ENCODE measurements at regions of chr11 and their contacts with region 1.

Region 1: DNA sequence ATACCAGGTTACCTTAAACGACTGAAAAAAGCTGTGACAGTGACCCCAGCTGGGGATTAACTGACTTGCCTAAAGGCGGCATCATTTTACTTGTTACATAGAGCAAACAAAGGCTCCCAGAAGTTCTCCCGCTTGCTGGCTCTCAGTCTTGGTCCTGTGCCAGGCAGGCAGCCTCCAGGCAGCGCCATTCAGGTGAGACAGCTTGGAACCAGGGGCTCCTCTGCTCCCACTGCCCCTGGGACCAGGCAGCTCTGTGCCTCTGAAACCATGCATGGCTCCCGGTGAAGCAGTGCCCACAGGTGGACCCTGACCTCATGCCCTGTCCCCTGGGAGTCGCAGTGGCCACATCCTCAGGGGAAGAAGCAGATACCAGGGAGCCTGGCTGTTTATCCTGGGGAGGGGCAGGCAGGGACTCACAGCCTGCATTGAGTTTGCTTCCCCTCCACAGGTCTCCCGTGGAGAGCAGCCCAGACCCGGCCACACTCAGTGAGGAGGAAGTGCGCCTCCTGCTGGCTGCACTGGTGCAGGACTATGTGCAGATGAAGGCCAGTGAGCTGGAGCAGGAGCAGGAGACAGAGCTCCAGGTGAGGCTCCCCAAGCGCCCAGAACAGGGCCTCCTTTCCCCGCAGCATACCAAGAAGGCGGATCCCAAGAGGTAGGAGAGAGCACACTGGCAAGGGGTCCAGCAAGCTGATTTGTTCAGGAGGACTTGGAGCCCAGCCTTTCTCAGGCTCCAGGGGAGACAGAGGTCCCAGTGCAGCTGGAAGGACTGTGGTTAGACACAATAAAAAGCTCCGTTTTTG is 15.6 kb upstream of the CYP2R1 start:
- DNase-seq: peak; percentile 93
- ATAC-seq: peak; percentile 59
- H3K4me3 Mint-ChIP-seq: no peak overlapping the region
- H3K27ac Mint-ChIP-seq: no peak overlapping the region
- H3K4me1 Mint-ChIP-seq: peaks cover 48% of the 10 kb centered on the region
- H3K27me3 Mint-ChIP-seq: no peaks in the 10 kb centered on the region
- CTCF ChIP-seq: peak; percentile 90

Region 2: DNA sequence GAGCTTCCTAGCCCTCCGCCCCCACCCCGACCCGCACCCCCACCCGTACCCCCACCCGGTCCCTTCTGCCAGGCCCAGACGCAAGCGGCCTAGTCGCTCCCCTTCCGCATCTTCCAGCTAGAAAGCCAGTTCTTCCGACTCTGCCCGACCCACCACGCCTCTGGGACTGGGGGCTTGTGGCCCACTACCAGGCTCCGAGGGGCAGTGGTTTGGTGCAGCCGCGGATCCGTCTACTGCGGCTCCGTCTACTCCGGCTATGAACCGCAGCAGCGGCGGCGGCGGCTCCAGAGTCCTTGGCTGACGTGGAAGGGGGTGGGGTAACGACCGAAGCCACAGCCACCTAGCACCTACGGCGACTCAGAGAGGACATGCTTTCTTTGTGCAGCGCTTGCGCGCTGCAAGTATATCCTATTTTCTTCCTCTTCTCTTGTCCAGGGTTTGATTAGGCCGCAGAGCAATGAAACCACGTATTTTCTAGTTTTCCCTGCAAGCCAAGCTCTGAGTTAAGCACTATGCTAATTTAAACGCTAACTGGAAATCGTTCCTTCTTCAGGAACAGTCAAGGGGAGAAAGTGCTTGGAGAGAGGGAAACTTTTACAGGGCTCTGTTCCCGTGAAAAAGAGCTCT is 407.9 kb before region 1 on chr11 and contains the start of gene COPB1:
- CTCF ChIA-PET with region 1: interaction called, 10 read pairs
- POLR2A ChIA-PET with region 1: no interaction called
- intact Hi-C with region 1: no loop called
- DNase-seq: peak; percentile 96
- ATAC-seq: peak; percentile 94
- H3K4me3 Mint-ChIP-seq: peak within 1 kb of the TSS; percentile 96
- H3K27ac Mint-ChIP-seq: peak within 1 kb of the TSS; percentile 99
- H3K4me1 Mint-ChIP-seq: peaks cover 34% of the 10 kb centered on the region
- H3K27me3 Mint-ChIP-seq: no peaks in the 10 kb centered on the region
- CTCF ChIP-seq: no peak
- total RNA-seq, gene COPB1: 90.9 to 93.5 TPM

Region 3: DNA sequence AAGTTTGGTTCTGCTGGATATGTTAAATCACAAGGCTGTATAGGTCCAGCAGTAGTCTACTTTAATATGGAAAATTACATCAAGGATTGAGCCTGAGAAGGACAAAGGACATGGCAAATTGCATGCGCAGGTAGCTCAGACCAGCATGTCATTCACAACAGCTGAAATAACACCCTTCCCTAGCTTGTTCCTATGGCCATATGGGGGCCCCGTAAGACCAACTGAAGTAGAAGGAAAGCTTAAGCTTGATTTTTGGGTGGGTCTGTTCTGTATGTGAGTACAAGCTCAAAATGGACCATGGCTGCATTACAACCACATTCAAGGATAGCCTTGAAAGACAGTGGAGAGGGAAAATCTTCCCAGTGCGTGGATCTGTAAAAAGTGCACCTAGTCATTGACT is 284.6 kb before region 1 on chr11:
- CTCF ChIA-PET with region 1: interaction called, 13 read pairs
- POLR2A ChIA-PET with region 1: no interaction called
- intact Hi-C with region 1: no loop called
- DNase-seq: peak; percentile 12
- ATAC-seq: no peak
- H3K4me3 Mint-ChIP-seq: no peak overlapping the region
- H3K27ac Mint-ChIP-seq: no peak overlapping the region
- H3K4me1 Mint-ChIP-seq: peaks cover 75% of the 10 kb centered on the region
- H3K27me3 Mint-ChIP-seq: no peaks in the 10 kb centered on the region
- CTCF ChIP-seq: no peak

Region 4: DNA sequence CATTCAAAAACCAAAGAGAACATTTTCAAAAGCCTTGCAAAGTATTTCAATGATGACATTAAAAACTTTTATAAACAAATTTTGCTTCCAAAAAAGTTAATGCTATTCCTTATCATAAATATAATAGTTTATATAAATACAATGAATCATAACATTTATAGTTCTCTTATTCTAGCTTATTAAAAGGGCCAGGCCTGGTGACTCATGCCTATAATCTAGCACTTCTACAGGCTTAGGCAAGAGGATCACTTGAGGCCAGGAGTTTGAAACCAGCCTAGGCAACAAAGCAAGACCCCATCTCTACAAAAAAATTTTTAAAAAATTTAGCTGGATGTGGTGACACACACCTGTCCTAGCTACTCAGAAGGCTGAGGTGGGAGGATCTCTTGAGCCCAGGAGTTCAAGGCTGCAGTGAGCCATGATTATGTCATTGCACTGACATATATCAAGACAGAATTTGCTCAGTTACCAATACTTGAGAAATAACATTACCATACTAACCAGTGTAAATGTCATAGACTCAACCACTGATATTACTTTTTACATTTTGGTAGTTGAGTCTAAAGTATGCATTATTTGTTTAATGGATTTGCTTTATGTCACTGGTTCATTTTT is 72.0 kb before region 1 on chr11:
- CTCF ChIA-PET with region 1: no interaction called
- POLR2A ChIA-PET with region 1: no interaction called
- intact Hi-C with region 1: no loop called
- DNase-seq: peak; percentile 7
- ATAC-seq: peak; percentile 60
- H3K4me3 Mint-ChIP-seq: no peak overlapping the region
- H3K27ac Mint-ChIP-seq: peak overlapping the region; percentile 17
- H3K4me1 Mint-ChIP-seq: peaks cover 6% of the 10 kb centered on the region
- H3K27me3 Mint-ChIP-seq: no peaks in the 10 kb centered on the region
- CTCF ChIP-seq: no peak

Region 5: GRCh38 chr11:14852571-14853177 is 54.9 kb before region 1 on chr11:
- CTCF ChIA-PET with region 1: interaction called, 15 read pairs
- POLR2A ChIA-PET with region 1: no interaction called
- intact Hi-C with region 1: no loop called
- DNase-seq: peak; percentile 22
- ATAC-seq: no peak
- H3K4me3 Mint-ChIP-seq: no peak overlapping the region
- H3K27ac Mint-ChIP-seq: peak overlapping the region; percentile 65
- H3K4me1 Mint-ChIP-seq: peaks cover 21% of the 10 kb centered on the region
- H3K27me3 Mint-ChIP-seq: no peaks in the 10 kb centered on the region
- CTCF ChIP-seq: no peak

Region 6: DNA sequence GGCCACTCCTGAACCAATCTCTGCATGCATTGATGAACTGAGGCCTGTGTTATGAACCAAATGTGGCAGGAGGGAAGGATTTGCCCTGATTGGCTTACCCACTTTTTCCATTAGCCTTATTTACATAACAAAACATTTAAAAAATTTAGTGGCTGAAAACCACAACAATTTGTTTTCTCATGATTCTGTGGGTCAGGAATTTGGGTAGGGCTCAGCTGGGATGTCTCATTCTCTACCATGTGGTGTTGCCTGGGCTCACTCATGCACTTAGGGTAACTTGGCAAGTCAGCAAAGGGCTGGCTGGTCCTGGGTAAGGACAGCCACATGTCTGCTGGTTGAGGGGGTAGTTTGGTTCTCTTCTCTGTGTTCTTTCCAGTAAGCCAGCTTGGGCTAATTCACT is 19.5 kb after region 1 on chr11:
- CTCF ChIA-PET with region 1: interaction called, 44 read pairs
- POLR2A ChIA-PET with region 1: no interaction called
- intact Hi-C with region 1: no loop called
- DNase-seq: no peak
- ATAC-seq: no peak
- H3K4me3 Mint-ChIP-seq: no peak overlapping the region
- H3K27ac Mint-ChIP-seq: no peak overlapping the region
- H3K4me1 Mint-ChIP-seq: no peaks in the 10 kb centered on the region
- H3K27me3 Mint-ChIP-seq: no peaks in the 10 kb centered on the region
- CTCF ChIP-seq: no peak

Region 7: GRCh38 chr11:15006139-15006759 is 98.6 kb after region 1 on chr11:
- CTCF ChIA-PET with region 1: interaction called, 199 read pairs
- POLR2A ChIA-PET with region 1: no interaction called
- intact Hi-C with region 1: loop called (anchors 5 kb)
- DNase-seq: peak; percentile 9
- ATAC-seq: peak; percentile 69
- H3K4me3 Mint-ChIP-seq: no peak overlapping the region
- H3K27ac Mint-ChIP-seq: no peak overlapping the region
- H3K4me1 Mint-ChIP-seq: no peaks in the 10 kb centered on the region
- H3K27me3 Mint-ChIP-seq: peaks cover 28% of the 10 kb centered on the region
- CTCF ChIP-seq: peak; percentile 89

Region 8: DNA sequence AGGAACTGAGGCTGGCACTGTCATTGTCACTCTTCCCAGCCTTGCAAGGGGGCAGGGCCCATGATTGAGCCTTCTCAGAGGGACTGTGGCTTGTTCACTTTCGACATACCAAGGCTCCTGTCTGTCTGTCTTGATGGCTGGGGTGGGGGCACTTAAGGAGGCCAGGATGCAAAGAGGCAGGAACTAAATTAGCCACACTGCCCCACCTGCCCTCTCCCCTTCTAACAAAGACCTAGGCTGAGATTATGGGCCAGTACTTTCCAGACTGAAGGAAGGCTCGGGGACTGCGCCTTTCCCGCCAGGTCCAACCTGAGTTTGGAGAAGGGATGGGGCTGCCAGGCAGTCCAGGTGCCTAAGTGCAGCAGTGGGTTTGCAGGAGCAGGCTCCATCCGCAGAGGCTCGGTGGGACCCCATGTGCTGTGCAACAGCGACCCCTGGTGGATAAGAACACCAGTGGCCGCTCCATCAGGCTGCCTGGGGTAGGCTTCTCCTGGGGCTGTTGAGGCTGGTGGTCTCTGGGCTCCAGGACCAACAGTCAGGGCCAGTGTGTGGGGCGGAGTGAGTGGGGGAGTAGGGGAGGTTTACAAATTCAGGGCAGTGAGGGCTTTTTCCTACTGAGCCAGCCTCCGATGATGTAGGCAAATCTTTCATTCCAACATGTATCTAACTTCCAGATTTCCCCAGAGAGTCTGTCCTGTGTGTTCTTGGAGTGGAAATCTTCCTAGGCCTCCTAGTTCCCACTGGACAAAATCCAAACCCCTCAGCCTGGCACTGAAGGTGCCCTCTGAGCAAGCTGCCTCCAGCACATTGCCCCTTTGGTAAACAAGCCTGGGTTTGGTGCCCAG is 301.0 kb after region 1 on chr11:
- CTCF ChIA-PET with region 1: interaction called, 22 read pairs
- POLR2A ChIA-PET with region 1: no interaction called
- intact Hi-C with region 1: loop called (anchors 5 kb)
- DNase-seq: peak; percentile 82
- ATAC-seq: peak; percentile 96
- H3K4me3 Mint-ChIP-seq: no peak overlapping the region
- H3K27ac Mint-ChIP-seq: no peak overlapping the region
- H3K4me1 Mint-ChIP-seq: no peaks in the 10 kb centered on the region
- H3K27me3 Mint-ChIP-seq: no peaks in the 10 kb centered on the region
- CTCF ChIP-seq: peak; percentile 86

Measured in activated CD8-positive, alpha-beta T cell treated with anti-CD3 and anti-CD28 coated beads for 36 hours (primary cell).